Endothelial cell of umbilical vein (primary cell): ENCODE measurements at regions of chrX and their contacts with region 1.

Region 1: GRCh38 chrX:153971450-153972367 is at the start of gene HCFC1:
- DNase-seq: peak; percentile 87
- H3K4me3 ChIP-seq: peak within 1 kb of the TSS; percentile 47 to 76 (median 74)
- H3K27ac ChIP-seq: peak within 1 kb of the TSS; percentile 98
- H3K4me1 ChIP-seq: peaks cover 45% of the 10 kb centered on the region
- H3K27me3 ChIP-seq: no peaks in the 10 kb centered on the region
- CTCF ChIP-seq: no peak
- POLR2A ChIP-seq: no peak
- total RNA-seq, gene HCFC1: 80.9 and 85.9 TPM in 2 replicates

Region 2: GRCh38 chrX:153927922-153928760 is 43.6 kb before region 1 on chrX:
- CTCF ChIA-PET with region 1: interaction called, 6 read pairs
- POLR2A ChIA-PET with region 1: interaction called, 3 read pairs
- dilution Hi-C with region 1: no loop called
- intact Hi-C with region 1: loop called (anchors 1 kb)
- DNase-seq: peak; percentile 98
- H3K4me3 ChIP-seq: peak overlapping the region in 2 of 3 experiments; percentile 44 to 49
- H3K27ac ChIP-seq: peak overlapping the region; percentile 100
- H3K4me1 ChIP-seq: peaks cover 44% of the 10 kb centered on the region
- H3K27me3 ChIP-seq: no peaks in the 10 kb centered on the region
- CTCF ChIP-seq: no peak
- POLR2A ChIP-seq: no peak

Region 3: DNA sequence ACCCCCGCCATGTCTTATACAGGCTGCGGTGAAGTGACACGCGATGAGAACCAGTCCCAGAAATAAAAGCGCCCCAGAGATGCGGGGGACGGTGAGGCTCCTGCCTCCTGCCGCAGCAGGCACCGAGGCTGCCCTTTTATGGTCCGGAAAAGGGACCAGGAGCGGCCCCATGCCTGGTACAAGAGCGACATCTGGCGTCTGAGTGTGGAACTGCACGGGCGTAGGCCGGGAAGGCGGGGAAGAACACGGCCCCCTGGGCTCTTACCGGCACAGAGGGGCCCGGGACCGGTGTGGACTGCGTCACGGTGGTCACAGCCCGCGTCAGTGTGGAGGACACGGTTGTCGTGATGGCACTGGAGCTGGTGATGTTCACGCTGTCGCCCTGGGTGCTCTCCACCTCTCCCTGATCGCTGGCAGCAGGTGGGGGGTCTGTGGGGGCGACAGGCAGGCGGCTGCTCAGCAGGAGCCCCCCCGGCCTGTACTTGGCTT is 18.3 kb before region 1 on chrX:
- CTCF ChIA-PET with region 1: no interaction called
- POLR2A ChIA-PET with region 1: no interaction called
- dilution Hi-C with region 1: no loop called
- intact Hi-C with region 1: loop called (anchors 2 kb)
- DNase-seq: peak; percentile 42
- H3K4me3 ChIP-seq: no peak overlapping the region
- H3K27ac ChIP-seq: no peak overlapping the region
- H3K4me1 ChIP-seq: peaks cover 21% of the 10 kb centered on the region
- H3K27me3 ChIP-seq: no peaks in the 10 kb centered on the region
- CTCF ChIP-seq: peak; percentile 79 to 84
- POLR2A ChIP-seq: no peak

Region 4: GRCh38 chrX:153984351-153985178 is 12.9 kb after region 1 on chrX:
- CTCF ChIA-PET with region 1: interaction called, 3 read pairs
- POLR2A ChIA-PET with region 1: no interaction called
- dilution Hi-C with region 1: no loop called
- intact Hi-C with region 1: loop called (anchors 1 kb)
- DNase-seq: no peak
- H3K4me3 ChIP-seq: no peak overlapping the region
- H3K27ac ChIP-seq: peak overlapping the region; percentile 30
- H3K4me1 ChIP-seq: peaks cover 10% of the 10 kb centered on the region
- H3K27me3 ChIP-seq: no peaks in the 10 kb centered on the region
- CTCF ChIP-seq: no peak
- POLR2A ChIP-seq: no peak

Region 5: DNA sequence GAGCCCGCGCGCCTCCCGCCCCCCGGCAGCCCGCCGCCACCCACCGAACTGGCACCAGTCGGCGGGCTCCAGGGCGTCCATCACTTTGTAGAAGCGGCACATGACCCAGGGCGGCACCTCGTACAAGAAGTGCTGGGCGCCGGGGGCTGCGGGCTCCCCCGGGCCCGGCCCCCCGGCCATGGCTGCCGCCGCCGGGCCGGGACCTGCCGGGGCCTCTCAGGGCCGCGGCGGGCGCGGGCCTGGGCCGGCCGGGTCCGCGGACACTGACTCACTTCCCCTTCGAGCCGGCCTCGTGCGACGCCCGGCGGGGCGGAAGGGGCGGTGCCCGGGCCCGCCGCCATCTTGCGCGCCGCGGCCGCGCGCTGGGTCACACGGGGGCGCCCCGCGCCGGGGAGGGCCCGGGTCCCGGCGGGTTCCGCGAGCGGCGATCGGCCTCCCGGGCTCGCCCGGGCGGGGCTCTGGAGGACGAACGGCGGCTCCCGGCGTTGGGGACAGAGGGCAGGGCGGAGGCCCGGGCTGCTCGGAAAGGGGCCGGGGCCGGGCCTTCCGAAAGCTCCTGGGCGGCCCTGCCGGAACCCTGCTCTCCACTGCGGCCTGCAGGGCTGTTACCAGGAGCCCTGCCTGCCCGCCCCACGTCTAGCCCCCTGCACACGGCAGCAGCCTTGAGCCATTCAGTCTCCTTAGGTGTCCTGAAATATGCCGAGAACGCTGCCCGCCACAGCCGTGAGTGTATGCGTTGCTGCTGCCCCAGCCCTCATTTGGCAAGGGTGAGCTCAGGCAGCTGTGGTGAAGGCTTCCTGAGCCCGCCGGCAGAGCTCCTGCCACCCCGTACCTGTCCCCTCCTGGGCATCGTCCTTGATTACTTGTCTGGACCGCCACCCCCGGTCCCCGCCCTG is 48.2 kb after region 1 on chrX and contains the start of gene IRAK1:
- CTCF ChIA-PET with region 1: interaction called, 3 read pairs
- POLR2A ChIA-PET with region 1: no interaction called
- dilution Hi-C with region 1: no loop called
- intact Hi-C with region 1: loop called (anchors 1 kb)
- DNase-seq: peak; percentile 37
- H3K4me3 ChIP-seq: peak within 1 kb of the TSS; percentile 44 to 69 (median 59)
- H3K27ac ChIP-seq: peak within 1 kb of the TSS; percentile 90
- H3K4me1 ChIP-seq: peaks cover 25% of the 10 kb centered on the region
- H3K27me3 ChIP-seq: no peaks in the 10 kb centered on the region
- CTCF ChIP-seq: no peak
- POLR2A ChIP-seq: no peak
- total RNA-seq, gene IRAK1: 136 and 138 TPM in 2 replicates

Region 6: DNA sequence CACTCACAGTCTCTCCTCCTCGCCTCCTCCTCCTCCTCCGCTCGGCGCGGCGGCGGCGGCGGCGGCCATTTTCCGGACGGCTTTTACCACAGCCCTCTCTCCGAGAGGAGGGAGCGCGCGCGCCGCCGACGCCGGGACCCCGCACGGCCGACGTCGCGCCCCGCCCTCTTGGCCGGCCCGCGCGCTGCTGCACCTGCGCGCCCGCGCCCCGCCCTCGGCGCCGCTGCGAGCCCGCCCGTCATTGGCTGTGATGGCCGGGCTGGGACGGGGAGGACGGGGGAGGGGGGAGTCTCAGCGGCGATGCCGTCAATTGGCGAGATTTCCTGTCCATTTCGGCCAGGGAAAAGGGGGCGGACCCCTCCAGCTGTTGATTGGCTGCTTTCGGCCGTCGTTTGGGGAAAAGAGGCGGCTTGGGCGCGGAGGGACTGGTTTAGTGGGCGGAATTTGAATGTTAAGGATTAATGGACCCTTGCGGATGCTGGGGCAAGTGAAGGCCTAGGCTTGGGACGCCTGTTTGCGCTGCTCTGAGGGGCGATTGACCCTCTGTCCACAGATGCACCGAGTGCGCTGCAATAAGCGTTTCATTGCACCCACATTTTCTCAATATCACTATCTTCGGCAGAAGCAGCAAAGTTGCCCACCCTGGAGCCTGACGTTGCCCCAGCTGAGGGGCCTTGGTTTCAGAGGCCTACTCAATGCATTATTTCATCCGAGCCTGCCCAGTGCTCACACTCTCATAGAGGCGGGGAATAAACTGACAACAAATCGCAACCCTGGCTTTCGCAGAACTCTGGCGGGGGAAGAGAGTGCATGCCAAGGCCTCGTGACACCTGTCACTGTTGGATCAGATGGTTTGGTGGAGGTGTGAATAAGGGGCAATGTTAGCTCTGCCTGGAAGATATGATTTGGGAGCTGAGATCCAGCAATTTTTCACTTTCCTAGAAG is 126.2 kb after region 1 on chrX and contains the start of gene MECP2:
- CTCF ChIA-PET with region 1: no interaction called
- POLR2A ChIA-PET with region 1: no interaction called
- dilution Hi-C with region 1: no loop called
- intact Hi-C with region 1: loop called (anchors 1 kb)
- DNase-seq: peak; percentile 92
- H3K4me3 ChIP-seq: peak within 1 kb of the TSS; percentile 71 to 76 (median 74)
- H3K27ac ChIP-seq: peak within 1 kb of the TSS; percentile 45
- H3K4me1 ChIP-seq: peaks cover 24% of the 10 kb centered on the region
- H3K27me3 ChIP-seq: peaks cover 0 to 3% of the 10 kb centered on the region in 2 experiments
- CTCF ChIP-seq: no peak
- POLR2A ChIP-seq: no peak
- total RNA-seq, gene MECP2: 40.9 and 45.3 TPM in 2 replicates

Region 7: DNA sequence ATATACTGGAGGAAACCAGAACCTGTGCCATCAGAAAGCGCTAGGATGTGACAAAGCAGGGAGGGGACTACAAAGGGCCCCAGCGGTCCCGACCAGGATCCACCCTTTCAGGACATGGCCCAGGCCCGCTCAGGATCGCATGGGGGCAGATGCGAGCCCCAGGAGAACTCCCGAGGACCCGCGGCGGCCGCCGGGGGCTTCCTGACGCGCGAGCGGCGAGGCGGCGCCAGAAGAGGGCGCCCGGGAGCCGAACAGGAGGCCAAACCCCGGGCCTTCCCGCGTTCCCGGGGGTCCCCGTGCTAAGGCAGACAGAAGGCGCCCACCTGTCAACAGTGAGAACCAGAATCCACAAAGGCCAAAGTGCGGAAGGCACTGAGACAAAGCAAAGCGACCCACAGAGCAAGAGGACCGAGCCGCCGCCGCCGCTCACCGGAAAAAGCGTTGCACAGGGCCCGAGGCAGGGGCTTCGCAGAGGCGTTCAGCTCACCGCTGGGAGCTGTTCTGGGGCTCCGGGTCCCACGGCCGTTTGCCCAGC is 165.0 kb after region 1 on chrX:
- CTCF ChIA-PET with region 1: no interaction called
- POLR2A ChIA-PET with region 1: no interaction called
- dilution Hi-C with region 1: no loop called
- intact Hi-C with region 1: no loop called
- DNase-seq: peak; percentile 54
- H3K4me3 ChIP-seq: peak overlapping the region in 1 of 3 experiments; percentile 21
- H3K27ac ChIP-seq: peak overlapping the region; percentile 13
- H3K4me1 ChIP-seq: peaks cover 13% of the 10 kb centered on the region
- H3K27me3 ChIP-seq: no peaks in the 10 kb centered on the region
- CTCF ChIP-seq: peak; percentile 76 to 78
- POLR2A ChIP-seq: no peak

Region 8: DNA sequence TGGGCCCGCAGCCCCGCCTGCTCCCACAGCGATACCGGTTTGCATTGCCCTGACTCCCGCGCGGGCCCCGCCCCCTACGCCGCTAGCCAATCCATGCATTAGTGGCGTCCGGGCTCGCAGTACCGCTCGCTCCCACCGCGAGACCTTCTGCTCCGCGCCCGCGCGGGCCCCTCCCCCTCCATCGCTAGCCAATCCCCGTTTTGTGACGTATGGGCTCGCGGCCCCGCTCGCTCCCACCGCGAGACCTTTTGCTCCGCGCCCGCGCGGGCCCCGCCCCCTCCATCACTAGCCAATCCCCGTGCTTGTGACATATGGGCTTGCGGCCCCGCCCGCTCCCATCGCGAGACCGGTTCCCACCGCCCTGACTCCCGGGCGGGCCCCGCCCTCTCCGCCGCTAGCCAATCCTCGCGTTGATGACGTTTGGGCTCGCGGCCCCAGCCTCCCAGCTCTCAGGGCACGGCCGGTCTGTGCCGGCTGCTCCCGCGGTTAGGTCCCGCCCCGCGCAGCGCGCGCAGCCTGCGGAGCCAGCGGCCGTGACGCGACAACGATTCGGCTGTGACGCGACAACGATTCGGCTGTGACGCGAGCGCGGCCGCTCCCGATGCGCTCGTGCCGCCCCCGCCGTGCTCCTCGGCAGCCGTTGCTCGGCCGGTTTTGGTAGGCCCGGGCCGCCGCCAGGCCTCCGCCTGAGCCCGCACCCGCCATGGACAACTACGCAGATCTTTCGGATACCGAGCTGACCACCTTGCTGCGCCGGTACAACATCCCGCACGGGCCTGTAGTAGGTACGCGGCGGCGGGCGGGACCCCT is 407.3 kb after region 1 on chrX and contains the start of gene EMD:
- CTCF ChIA-PET with region 1: interaction called, 3 read pairs
- POLR2A ChIA-PET with region 1: no interaction called
- dilution Hi-C with region 1: no loop called
- intact Hi-C with region 1: loop called (anchors 1 kb)
- DNase-seq: peak; percentile 98
- H3K4me3 ChIP-seq: peak within 1 kb of the TSS; percentile 70 to 95 (median 78)
- H3K27ac ChIP-seq: peak within 1 kb of the TSS; percentile 87
- H3K4me1 ChIP-seq: peaks cover 9% of the 10 kb centered on the region
- H3K27me3 ChIP-seq: no peaks in the 10 kb centered on the region
- CTCF ChIP-seq: no peak
- POLR2A ChIP-seq: no peak
- total RNA-seq, gene EMD: 71.5 and 76.8 TPM in 2 replicates